Activated B cell treated with CpG ODN at 0.5 μM for 24 hours (primary cell): ENCODE measurements at regions of chr17 and their contacts with region 1.

Region 1: DNA sequence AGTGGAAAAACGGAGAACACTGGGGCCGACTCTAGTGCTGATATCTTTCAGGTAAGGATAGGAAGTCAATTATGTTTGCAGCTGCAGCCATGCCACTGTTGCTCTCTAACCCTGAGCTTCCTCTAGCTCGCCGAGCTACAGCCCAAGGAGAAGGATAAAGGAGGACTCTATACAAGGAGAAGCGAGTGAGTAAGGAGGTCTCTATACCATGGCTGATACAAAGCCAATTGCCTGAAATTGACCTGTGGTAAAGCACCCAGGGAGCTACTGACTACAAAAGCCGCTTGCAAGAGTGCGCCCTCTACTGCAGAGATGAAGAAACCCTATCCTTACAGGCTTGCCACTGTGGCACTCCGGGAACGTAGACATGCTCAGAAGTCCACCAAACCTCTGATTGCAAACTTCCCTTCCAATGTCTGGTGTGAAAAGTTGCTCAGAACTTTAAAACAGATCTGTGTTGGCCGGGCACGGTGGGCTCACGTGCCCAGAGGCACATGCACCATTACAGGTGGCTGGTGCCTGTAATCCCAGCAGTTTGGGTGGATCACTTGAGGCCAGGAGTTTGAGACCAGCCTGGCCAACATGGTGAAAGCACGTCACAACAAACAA is 10.8 kb upstream of the SLC46A1 start:
- DNase-seq: peak; percentile 33
- ATAC-seq: peak; percentile 94
- H3K4me3 Mint-ChIP-seq: no peak overlapping the region
- H3K27ac Mint-ChIP-seq: no peak overlapping the region
- H3K4me1 Mint-ChIP-seq: peaks cover 4% of the 10 kb centered on the region
- H3K27me3 Mint-ChIP-seq: peaks cover 18% of the 10 kb centered on the region
- CTCF ChIP-seq: peak; percentile 72

Region 2: GRCh38 chr17:27805520-27806146 is 611.2 kb before region 1 on chr17:
- CTCF ChIA-PET with region 1: interaction called, 11 read pairs
- POLR2A ChIA-PET with region 1: no interaction called
- intact Hi-C with region 1: loop called (anchors 2 kb)
- DNase-seq: peak; percentile 61
- ATAC-seq: peak; percentile 64
- H3K4me3 Mint-ChIP-seq: peak overlapping the region; percentile 83
- H3K27ac Mint-ChIP-seq: peak overlapping the region; percentile 96
- H3K4me1 Mint-ChIP-seq: peaks cover 50% of the 10 kb centered on the region
- H3K27me3 Mint-ChIP-seq: no peaks in the 10 kb centered on the region
- CTCF ChIP-seq: no peak

Region 3: DNA sequence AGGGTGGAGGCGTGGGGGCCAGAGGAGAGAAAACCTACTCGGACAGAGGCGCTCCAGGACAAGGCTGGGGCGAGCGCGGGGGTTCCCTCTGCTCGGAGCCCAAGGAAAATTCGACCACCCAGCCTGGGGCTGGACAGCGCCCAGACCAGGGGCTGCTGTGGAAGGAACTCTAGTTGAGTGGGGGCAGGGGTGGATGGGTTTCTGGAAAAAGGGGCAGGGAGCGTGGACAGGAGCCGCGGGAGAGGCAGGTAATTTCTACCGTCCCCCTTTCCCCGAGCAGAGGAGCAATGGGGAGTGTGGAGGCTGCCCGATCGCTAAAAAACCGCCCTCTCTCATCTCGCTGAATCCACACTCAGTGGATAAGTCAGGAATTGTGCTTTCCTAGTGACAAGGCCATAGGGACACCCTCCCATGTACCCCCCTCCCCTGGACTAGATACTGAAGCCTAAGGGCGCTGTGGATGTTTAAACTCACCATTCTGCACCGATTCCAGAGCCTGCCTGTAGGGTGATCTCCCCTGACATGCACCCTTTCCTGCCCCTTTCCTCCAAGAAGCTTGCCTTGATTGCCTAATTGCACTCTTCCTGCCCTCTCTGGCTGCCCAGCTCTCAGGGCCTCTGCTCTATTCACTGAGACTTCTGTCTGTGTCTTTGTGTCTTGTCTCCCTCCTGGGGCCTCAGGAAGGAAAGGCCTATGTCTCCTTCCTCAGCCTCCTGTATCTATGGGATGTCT is 188.5 kb before region 1 on chr17:
- CTCF ChIA-PET with region 1: interaction called, 4 read pairs
- POLR2A ChIA-PET with region 1: no interaction called
- intact Hi-C with region 1: loop called (anchors 1 kb)
- DNase-seq: no peak
- ATAC-seq: no peak
- H3K4me3 Mint-ChIP-seq: peak overlapping the region; percentile 71
- H3K27ac Mint-ChIP-seq: no peak overlapping the region
- H3K4me1 Mint-ChIP-seq: peaks cover 13% of the 10 kb centered on the region
- H3K27me3 Mint-ChIP-seq: peaks cover 46% of the 10 kb centered on the region
- CTCF ChIP-seq: no peak

Region 4: GRCh38 chr17:28341516-28341915 is 75.3 kb before region 1 on chr17:
- CTCF ChIA-PET with region 1: no interaction called
- POLR2A ChIA-PET with region 1: no interaction called
- intact Hi-C with region 1: no loop called
- DNase-seq: no peak
- ATAC-seq: no peak
- H3K4me3 Mint-ChIP-seq: no peak overlapping the region
- H3K27ac Mint-ChIP-seq: no peak overlapping the region
- H3K4me1 Mint-ChIP-seq: peaks cover 16% of the 10 kb centered on the region
- H3K27me3 Mint-ChIP-seq: no peaks in the 10 kb centered on the region
- CTCF ChIP-seq: no peak

Region 5: DNA sequence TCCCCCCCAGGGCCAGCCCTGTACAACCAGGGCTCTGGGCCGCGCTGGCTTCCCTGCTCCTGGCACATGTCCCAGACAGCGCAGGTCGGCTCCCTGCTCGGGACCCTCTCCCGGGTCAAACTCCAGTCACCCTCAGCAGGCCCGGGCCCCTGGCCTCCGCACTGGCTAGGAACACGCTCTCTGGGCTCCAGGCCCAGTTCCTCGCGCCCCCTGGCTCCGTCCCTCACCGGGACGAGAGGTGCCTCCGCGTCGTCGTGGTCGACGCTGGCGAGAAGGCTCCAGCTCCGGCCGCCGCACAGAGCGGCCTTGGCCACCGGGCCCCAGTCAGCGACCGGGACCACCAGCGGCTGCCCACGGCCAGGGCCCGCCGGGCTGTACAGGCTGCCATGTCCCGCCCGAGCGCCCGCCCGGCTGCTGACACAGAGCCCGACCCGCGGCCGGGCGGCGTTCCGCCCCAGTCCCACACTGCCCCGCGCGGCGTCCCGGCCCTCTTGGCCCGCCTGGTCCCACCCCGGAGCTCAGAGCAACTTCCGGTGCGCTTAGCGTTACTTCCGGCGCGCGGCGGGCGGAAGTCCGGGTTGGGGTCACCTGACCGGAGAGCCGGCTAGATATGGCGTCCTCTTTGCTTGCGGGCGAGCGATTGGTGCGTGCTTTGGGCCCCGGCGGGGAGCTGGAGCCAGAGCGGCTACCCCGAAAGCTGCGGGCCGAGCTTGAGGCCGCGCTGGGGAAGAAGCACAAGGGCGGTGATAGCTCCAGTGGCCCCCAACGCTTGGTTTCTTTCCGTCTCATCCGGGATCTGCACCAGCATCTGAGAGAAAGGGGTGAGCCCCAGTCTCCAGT is 59.5 kb before region 1 on chr17 and contains the start of gene POLDIP2:
- CTCF ChIA-PET with region 1: interaction called, 8 read pairs
- POLR2A ChIA-PET with region 1: interaction called, 4 read pairs
- intact Hi-C with region 1: loop called (anchors 1 kb)
- DNase-seq: peak; percentile 96
- ATAC-seq: peak; percentile 98
- H3K4me3 Mint-ChIP-seq: peak within 1 kb of the TSS; percentile 97
- H3K27ac Mint-ChIP-seq: peak within 1 kb of the TSS; percentile 93
- H3K4me1 Mint-ChIP-seq: peaks cover 26% of the 10 kb centered on the region
- H3K27me3 Mint-ChIP-seq: no peaks in the 10 kb centered on the region
- CTCF ChIP-seq: no peak
- total RNA-seq, gene POLDIP2: 60.5 and 65.2 TPM in 2 replicates